Tibial artery (tissue), 4 donors: ENCODE measurements at regions of chr19 and their contacts with region 1.

Region 1: DNA sequence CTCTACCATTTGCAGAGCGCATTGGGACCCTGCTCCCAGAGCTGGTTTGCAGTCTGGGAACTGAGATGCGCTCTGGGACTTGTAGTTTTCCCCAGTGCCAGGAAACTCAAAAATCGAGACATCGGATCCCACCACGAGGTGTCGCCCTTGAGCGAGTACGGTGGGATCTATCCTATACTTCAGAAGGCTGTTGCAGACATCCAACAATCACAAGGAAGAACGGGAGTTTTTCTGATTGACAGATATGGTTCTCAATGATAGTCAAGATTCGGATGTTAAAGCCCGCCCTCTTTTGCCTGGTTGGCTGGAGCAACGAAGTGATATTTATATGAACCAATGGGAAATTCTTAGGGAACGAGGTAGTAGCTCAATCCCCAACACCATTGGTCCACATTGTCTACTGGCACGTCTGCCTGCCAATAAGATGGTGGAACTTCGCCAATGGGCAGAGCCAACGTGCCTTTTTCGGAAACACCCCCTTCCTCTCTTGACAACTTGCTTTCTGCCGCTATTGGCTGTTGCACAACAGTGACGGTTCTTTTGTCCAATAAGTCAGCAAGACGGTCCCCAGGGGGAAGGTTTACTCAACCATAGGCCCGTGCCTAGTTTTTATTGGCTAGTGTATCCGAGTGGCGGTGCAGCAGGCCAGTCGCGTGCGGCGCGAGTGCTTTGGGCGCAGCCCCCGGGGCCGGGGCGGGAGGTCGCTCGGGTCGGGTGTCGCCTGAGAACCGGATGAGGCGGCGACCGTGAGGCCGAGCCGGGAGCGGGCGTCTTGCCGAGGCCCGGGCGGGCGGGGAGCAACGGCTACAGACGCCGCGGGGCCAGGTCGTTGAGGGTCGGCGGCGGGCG is at the start of gene DNM2:
- DNase-seq: peak; percentile 99 to 100
- H3K4me3 ChIP-seq: peak within 1 kb of the TSS; percentile 97 to 98
- H3K27ac ChIP-seq: peak within 1 kb of the TSS; percentile 89 to 91
- H3K4me1 ChIP-seq: peaks cover 0 to 35% (median 29%) of the 10 kb centered on the region in 4 donors
- H3K27me3 ChIP-seq: no peaks in the 10 kb centered on the region
- CTCF ChIP-seq: peak; percentile 68 to 92

Region 2: GRCh38 chr19:10852098-10852800 is 134.7 kb after region 1 on chr19:
- intact Hi-C with region 1: loop called (anchors 5 kb)
- DNase-seq: no peak
- H3K4me3 ChIP-seq: no peak overlapping the region
- H3K27ac ChIP-seq: no peak overlapping the region
- H3K4me1 ChIP-seq: no peaks in the 10 kb centered on the region
- H3K27me3 ChIP-seq: peaks cover 0 to 12% of the 10 kb centered on the region in 2 donors
- CTCF ChIP-seq: no peak

Region 3: GRCh38 chr19:10864538-10864899 is 146.9 kb after region 1 on chr19:
- intact Hi-C with region 1: loop called (anchors 2 kb)
- DNase-seq: peak; percentile 83 to 90
- H3K4me3 ChIP-seq: no peak overlapping the region
- H3K27ac ChIP-seq: peak overlapping the region; percentile 59 to 71
- H3K4me1 ChIP-seq: peaks cover 0 to 23% (median 10%) of the 10 kb centered on the region in 4 donors
- H3K27me3 ChIP-seq: no peaks in the 10 kb centered on the region
- CTCF ChIP-seq: peak; percentile 83 to 87